Activated T-helper 1 cell treated with anti-CD3 and anti-CD28 coated beads, Interleukin-12 subunit alpha, Interleukin-12 subunit beta, Interleukin-2, Interleukin-4 antibody, amounts not matched to agents 30 ng/mL and 10 ng/mL and 1 ng/mL, durations not matched to agents 14 hours and 24 hours and 36 hours (primary cell): ENCODE measurements at regions of chr1 and their contacts with region 1.

Region 1: DNA sequence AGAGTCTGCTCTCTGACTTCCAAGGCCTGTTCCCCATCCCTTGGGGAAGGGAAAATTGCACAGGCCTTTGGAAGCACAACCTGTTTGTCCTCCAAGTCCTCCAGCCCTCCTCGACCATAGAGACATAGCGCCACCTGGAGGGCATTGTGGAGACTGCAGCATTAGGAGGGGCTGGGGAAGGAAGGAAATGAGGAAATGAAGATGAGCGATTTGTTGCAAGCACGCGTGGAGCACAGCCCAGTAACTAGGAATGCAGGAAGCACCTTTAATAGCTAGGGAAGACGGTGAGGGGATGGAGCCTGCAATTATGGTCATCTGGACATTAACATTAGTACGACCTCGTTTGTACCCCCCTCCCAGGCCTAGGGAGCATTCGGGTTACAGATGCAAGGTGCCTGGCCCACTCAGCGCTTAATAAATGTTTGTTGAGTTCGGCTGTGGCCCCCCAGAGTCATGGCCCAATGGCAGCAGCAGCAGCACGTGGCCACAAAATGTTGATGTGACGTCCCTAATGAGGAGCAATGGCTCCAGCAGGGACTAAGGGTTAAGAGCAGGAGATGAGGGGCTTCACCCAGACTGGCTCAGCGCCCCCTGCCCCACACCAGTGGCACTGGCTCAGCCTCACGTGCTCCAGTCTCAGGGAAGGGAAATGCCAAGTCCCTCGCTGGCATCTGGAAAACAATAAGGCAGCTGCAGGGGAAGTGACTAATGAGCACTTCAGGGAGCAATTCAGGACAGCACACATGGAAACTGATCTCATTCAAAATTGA is 8.0 kb upstream of the CAMK2N1 start:
- DNase-seq: peak; percentile 70
- H3K4me3 Mint-ChIP-seq: no peak overlapping the region
- H3K27ac Mint-ChIP-seq: no peak overlapping the region
- H3K4me1 Mint-ChIP-seq: peaks cover 18% of the 10 kb centered on the region
- H3K27me3 Mint-ChIP-seq: peaks cover 14% of the 10 kb centered on the region

Region 2: DNA sequence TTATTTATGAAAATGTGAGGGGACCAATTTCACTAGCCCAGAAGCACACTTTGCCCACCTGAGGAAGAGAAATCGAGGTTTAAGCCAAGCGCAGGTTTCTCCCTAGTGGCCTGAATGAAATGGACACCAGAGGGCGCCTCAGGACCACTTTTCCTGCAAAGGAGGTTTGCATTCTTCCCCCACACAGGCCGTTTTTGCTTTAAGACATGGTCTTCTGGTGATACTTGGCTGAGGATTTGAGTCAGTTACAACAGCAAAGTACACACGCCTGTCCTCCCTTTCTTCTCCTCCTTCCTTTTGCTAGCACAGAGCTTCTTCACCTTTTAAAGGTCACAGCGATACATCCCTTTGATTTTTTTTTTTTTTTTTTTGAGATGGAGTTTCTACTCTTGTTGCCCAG is 576.0 kb before region 1 on chr1:
- intact Hi-C with region 1: loop called (anchors 1 kb)
- DNase-seq: peak; percentile 57
- H3K4me3 Mint-ChIP-seq: no peak overlapping the region
- H3K27ac Mint-ChIP-seq: no peak overlapping the region
- H3K4me1 Mint-ChIP-seq: peaks cover 6% of the 10 kb centered on the region
- H3K27me3 Mint-ChIP-seq: no peaks in the 10 kb centered on the region

Region 3: DNA sequence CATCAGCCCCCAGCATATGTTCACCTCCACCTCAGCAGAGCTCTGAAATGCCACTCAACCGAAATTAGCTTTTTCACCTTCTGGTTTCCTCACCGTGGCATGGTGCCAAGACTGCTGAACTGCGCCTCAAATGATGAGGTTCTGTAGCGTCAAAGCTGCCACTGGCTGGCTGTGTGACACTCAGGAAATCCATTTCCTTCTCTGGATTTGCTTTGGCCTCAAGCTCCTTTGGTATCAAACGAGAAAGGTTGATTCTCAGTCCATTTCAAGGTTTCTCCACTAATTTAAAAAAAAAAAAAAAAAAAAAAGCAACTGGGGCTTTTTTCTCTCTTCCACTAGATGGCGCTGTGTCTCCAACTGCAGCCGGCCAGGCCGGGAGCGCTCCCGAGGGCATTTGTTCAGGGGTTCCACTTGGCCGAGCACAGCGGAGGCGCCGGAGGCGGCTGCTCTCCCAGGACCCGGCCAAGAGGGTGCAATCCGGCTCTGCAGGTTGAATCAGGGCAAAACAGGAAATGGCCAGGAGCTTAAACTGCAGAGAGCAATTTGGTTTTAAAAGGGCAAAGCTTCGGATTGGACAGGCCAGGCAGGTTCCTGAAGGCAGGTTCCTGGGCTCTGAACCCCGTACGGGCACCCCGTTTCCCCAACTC is 281.2 kb before region 1 on chr1:
- intact Hi-C with region 1: loop called (anchors 1 kb)
- DNase-seq: peak; percentile 42
- H3K4me3 Mint-ChIP-seq: no peak overlapping the region
- H3K27ac Mint-ChIP-seq: no peak overlapping the region
- H3K4me1 Mint-ChIP-seq: peaks cover 6% of the 10 kb centered on the region
- H3K27me3 Mint-ChIP-seq: peaks cover 44% of the 10 kb centered on the region

Region 4: DNA sequence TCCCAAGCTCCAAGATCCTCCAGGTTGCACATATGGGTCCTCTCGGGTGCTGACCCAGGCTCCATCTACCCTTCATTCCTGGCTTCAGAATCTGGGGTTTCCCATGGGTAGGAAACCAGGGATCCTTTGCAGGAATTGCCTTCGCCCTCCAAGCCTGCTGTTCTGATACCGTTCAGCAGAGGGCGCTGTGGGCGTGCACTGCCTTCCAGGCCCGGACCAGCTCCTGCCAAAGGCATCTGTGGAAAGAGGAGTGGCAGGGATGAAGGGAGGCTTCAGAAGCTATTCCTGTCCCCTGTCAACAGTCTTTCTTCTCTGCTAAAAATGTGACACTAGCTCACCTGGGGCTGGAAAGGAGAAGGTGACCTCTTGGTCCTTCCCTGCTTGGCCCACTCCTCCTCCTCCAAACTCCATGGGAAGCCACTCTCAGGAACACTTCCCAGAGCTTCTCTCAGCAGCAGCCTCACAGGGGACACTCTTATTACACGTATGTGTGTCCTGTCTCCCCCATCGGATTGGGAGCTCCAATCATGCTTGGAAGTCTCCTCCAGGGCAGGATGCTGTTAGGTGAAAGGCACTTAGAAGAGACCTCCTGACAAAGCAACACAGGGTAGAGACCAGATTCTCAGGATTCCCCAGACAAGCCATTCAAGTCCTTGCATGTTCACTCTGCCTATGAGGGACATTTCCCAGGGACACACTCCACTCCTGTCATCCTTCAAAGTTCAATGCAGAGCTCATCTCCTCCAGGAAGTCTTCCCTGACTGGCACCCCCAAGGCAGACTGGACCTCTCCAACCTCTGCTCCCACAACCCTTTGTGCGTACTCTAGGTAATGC is 132.0 kb before region 1 on chr1:
- intact Hi-C with region 1: loop called (anchors 1 kb)
- DNase-seq: no peak
- H3K4me3 Mint-ChIP-seq: no peak overlapping the region
- H3K27ac Mint-ChIP-seq: no peak overlapping the region
- H3K4me1 Mint-ChIP-seq: peaks cover 11% of the 10 kb centered on the region
- H3K27me3 Mint-ChIP-seq: peaks cover 47% of the 10 kb centered on the region

Region 5: DNA sequence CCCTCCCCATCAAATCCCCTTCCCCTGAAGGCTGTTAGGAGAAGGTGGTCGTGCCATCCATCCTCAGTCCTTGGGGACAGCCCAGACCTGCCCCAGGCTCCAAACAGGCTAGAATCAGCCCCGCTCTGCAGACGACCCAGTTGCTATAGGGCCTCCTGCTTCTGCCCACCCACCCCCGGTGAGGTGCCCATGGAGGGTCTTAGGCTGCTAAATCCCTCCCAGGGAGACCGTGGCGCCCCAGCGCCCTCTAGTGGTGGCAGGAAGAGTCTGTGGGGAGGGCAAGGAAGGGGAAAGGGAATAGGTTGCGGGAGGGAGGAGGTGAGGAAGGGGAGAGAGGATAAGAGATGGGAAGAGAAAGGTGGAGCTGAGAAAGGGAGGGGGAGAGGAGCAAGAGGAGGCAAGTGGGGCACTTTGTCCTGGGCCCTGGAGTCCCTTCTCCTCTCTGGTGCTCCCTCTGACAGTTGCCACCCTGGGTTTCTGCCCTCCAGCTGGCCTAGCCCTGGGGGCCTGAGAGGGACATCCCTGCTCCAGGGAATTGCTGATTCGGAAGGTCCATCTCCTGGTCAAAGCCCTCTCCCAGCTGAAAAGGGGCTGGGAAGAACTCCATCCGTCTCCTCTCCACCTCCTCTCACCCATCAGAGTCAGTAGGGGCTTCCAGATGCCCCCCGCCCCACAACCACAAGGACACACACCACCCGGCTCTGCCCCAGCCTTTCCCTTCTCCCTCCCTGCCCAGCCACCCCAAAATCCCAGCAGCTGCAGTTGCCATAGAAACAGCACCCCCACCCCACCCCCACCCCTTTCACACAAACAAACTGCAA is 63.5 kb before region 1 on chr1:
- intact Hi-C with region 1: loop called (anchors 5 kb)
- DNase-seq: peak; percentile 8
- H3K4me3 Mint-ChIP-seq: no peak overlapping the region
- H3K27ac Mint-ChIP-seq: no peak overlapping the region
- H3K4me1 Mint-ChIP-seq: peaks cover 8% of the 10 kb centered on the region
- H3K27me3 Mint-ChIP-seq: peaks cover 8% of the 10 kb centered on the region

Region 6: GRCh38 chr1:20507564-20508410 is 13.8 kb after region 1 on chr1 and contains the start of gene MUL1:
- intact Hi-C with region 1: no loop called
- DNase-seq: peak; percentile 91
- H3K4me3 Mint-ChIP-seq: peak within 1 kb of the TSS; percentile 93
- H3K27ac Mint-ChIP-seq: peak within 1 kb of the TSS; percentile 93
- H3K4me1 Mint-ChIP-seq: peaks cover 11% of the 10 kb centered on the region
- H3K27me3 Mint-ChIP-seq: peaks cover 4% of the 10 kb centered on the region
- total RNA-seq, gene MUL1: 22.0 and 22.8 TPM in 2 replicates